Breast epithelium (tissue), 4 donors: ENCODE measurements at regions of chr9 and their contacts with region 1.

Region 1: GRCh38 chr9:120441408-120442307 is 138.3 kb downstream of the CDK5RAP2 start:
- DNase-seq: no peak
- H3K4me3 ChIP-seq: no peak overlapping the region
- H3K27ac ChIP-seq: peak overlapping the region in 1 of 2 donors; percentile 51
- H3K4me1 ChIP-seq: no peaks in the 10 kb centered on the region
- H3K27me3 ChIP-seq: no peaks in the 10 kb centered on the region
- CTCF ChIP-seq: no peak
- POLR2A ChIP-seq: no peak

Region 2: GRCh38 chr9:118782790-118783463 is 1658.7 kb before region 1 on chr9:
- intact Hi-C with region 1: loop called (anchors 5 kb)
- DNase-seq: no peak
- H3K4me3 ChIP-seq: no peak overlapping the region
- H3K27ac ChIP-seq: no peak overlapping the region
- H3K4me1 ChIP-seq: no peaks in the 10 kb centered on the region
- H3K27me3 ChIP-seq: no peaks in the 10 kb centered on the region
- CTCF ChIP-seq: no peak
- POLR2A ChIP-seq: no peak